Activated naive CD4-positive, alpha-beta T cell treated with anti-CD3 and anti-CD28 coated beads for 36 hours (primary cell): ENCODE measurements at regions of chr16 and their contacts with region 1.

Region 1: DNA sequence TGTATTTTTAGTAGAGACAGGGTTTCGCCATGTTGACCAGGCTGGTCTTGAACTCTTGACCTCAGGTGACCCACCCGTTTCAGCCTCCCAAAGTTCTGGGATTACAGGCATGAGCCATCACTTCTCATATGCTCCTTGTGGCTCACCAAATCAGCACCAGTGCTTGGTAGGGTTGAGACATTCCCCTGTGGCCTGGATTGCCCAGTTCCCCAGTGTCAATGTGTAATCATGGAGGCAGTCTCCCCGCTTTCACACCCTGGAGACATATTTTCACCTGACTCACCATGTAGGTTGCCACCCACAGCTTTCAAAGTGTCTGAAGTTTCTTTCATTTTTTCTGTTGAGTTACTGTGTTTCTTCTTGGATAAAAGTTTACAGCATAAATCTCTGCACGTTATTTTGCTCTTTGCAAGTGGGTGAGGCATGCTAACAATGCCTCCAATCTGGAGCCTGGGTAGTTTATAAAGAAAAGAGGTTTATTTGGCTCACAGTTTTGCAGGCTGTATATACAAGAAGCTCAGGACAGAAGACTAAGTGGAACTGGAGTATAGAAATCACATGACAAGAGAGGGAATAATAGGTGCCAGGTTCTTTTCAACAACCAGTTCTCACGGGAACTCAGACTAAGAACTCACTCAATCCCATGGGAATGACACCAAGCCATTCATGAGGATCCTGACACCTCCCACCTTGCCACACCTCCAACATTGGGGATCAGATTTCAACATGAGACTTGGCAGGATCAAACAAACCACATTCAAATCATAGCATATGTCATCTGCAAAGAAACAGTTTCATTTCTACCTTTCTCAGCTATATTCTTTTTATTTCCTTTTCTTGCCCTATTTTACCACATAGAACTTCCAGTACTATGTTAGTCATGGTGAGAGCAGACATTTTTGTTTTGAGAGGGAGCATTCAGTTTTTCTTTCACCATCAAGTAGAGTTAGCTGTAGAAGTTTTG is 113.2 kb downstream of the PHKB start:
- DNase-seq: peak; percentile 70
- H3K4me3 Mint-ChIP-seq: no peak overlapping the region
- H3K27ac Mint-ChIP-seq: peak overlapping the region; percentile 86
- H3K4me1 Mint-ChIP-seq: peaks cover 56% of the 10 kb centered on the region
- H3K27me3 Mint-ChIP-seq: no peaks in the 10 kb centered on the region

Region 2: GRCh38 chr16:46822270-46822669 is 752.1 kb before region 1 on chr16:
- CTCF ChIA-PET with region 1: no interaction called
- intact Hi-C with region 1: loop called (anchors 10 kb)
- DNase-seq: peak; percentile 74
- H3K4me3 Mint-ChIP-seq: no peak overlapping the region
- H3K27ac Mint-ChIP-seq: no peak overlapping the region
- H3K4me1 Mint-ChIP-seq: peaks cover 30% of the 10 kb centered on the region
- H3K27me3 Mint-ChIP-seq: no peaks in the 10 kb centered on the region

Region 3: GRCh38 chr16:47460711-47461597 is 113.4 kb before region 1 on chr16 and contains the starts of genes ITFG1 and PHKB:
- CTCF ChIA-PET with region 1: no interaction called
- intact Hi-C with region 1: loop called (anchors 1 kb)
- DNase-seq: peak; percentile 93
- H3K4me3 Mint-ChIP-seq: peak within 1 kb of the TSS; percentile 92
- H3K27ac Mint-ChIP-seq: peak within 1 kb of the TSS; percentile 88
- H3K4me1 Mint-ChIP-seq: peaks cover 58% of the 10 kb centered on the region
- H3K27me3 Mint-ChIP-seq: no peaks in the 10 kb centered on the region
- total RNA-seq, gene ITFG1: 17.6 to 18.3 TPM
- total RNA-seq, gene PHKB: 22.5 to 25.3 TPM

Region 4: DNA sequence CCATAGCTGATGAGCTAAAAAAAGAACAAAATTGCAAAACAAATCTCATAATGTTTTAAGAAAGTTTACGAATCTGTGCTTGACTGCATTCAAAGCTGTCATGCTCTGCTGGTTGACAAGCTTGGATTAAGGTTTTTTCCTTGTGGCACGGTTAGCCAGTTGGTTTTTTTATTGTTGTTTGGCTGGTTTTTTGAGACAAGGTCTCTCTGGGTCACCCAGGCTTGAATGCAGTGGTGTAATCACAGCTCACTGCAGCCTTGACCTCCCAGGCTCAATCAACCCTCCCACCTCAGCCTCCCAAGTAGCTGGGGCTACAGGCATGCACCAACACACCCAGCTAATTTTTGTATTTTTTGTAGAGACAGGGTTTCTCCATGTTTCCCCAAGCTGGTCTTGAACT is 67.6 kb before region 1 on chr16:
- CTCF ChIA-PET with region 1: no interaction called
- intact Hi-C with region 1: no loop called
- DNase-seq: no peak
- H3K4me3 Mint-ChIP-seq: no peak overlapping the region
- H3K27ac Mint-ChIP-seq: no peak overlapping the region
- H3K4me1 Mint-ChIP-seq: no peaks in the 10 kb centered on the region
- H3K27me3 Mint-ChIP-seq: no peaks in the 10 kb centered on the region

Region 5: GRCh38 chr16:47562366-47562765 is 12.0 kb before region 1 on chr16:
- CTCF ChIA-PET with region 1: no interaction called
- intact Hi-C with region 1: no loop called
- DNase-seq: no peak
- H3K4me3 Mint-ChIP-seq: no peak overlapping the region
- H3K27ac Mint-ChIP-seq: no peak overlapping the region
- H3K4me1 Mint-ChIP-seq: peaks cover 29% of the 10 kb centered on the region
- H3K27me3 Mint-ChIP-seq: no peaks in the 10 kb centered on the region

Region 6: DNA sequence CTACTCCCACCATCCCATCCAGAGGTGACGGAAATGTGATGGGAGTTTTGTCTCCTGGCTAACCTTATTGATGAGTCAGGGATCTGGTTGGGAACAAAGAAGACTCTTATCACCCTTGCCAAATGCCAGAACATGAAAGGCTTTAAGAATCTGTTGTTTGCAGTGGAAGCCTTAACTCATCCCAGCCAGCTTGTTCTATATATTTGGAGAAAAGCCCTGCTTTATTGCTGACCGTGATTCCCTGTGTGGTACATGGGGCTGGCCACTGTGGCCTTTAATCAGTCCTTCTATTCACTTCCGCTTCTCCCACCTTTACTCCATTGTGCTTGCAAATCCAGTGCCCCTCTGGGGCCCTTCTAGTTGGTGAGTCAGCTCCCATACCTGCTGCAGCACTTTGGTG is 43.4 kb after region 1 on chr16:
- CTCF ChIA-PET with region 1: no interaction called
- intact Hi-C with region 1: loop called (anchors 2 kb)
- DNase-seq: no peak
- H3K4me3 Mint-ChIP-seq: no peak overlapping the region
- H3K27ac Mint-ChIP-seq: no peak overlapping the region
- H3K4me1 Mint-ChIP-seq: peaks cover 2% of the 10 kb centered on the region
- H3K27me3 Mint-ChIP-seq: no peaks in the 10 kb centered on the region

Region 7: DNA sequence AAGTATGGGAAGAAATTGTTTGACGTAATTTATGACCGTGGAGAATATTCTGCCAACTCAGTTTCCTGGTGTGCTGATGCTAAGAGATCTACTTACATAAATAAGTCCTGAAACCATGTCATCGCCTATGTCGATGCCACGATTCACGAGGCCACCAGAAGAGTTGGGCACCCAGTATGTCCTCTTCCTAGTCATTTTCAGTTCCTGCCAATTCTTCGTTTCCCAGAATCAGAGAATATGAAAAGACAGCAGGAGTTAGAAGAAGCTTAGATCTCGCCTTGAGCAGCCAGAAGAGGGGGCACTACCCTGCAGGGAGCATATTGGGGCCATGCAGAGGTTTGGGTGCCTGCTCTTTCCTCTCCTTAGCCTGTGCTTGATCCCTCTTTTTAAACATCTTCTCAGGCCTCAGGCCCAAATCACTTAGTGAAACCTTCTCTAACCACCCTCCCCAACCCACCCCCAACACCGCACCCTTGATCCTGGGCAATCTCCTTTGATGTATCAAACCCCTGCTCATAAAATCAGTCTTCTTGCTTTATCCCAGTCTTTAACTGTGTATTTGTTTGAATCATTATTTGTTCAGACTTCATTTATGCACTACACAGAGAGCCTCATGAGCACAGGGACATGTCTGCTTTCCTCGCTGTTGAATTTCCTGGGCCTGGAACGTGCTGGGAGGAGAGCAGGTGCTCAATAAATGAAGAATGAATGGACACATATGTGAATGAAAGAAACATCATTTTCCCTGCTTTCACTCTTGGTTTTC is 657.5 kb after region 1 on chr16:
- CTCF ChIA-PET with region 1: no interaction called
- intact Hi-C with region 1: loop called (anchors 10 kb)
- DNase-seq: peak; percentile 73
- H3K4me3 Mint-ChIP-seq: no peak overlapping the region
- H3K27ac Mint-ChIP-seq: peak overlapping the region; percentile 50
- H3K4me1 Mint-ChIP-seq: peaks cover 21% of the 10 kb centered on the region
- H3K27me3 Mint-ChIP-seq: peaks cover 2% of the 10 kb centered on the region